ENCODE measurements at regions of chr19 and their contacts with region 1.

Region 1: GRCh38 chr19:17985037-17985818 is 18.3 kb downstream of the KCNN1 start:
- DNase-seq: no peak
- H3K4me3 ChIP-seq: no peak overlapping the region
- H3K27ac ChIP-seq: no peak overlapping the region
- H3K4me1 ChIP-seq: no peaks in the 10 kb centered on the region
- H3K27me3 ChIP-seq: no peaks in the 10 kb centered on the region
- CTCF ChIP-seq: no peak
- EP300 ChIP-seq: no peak
- POLR2A ChIP-seq: no peak

Region 2: DNA sequence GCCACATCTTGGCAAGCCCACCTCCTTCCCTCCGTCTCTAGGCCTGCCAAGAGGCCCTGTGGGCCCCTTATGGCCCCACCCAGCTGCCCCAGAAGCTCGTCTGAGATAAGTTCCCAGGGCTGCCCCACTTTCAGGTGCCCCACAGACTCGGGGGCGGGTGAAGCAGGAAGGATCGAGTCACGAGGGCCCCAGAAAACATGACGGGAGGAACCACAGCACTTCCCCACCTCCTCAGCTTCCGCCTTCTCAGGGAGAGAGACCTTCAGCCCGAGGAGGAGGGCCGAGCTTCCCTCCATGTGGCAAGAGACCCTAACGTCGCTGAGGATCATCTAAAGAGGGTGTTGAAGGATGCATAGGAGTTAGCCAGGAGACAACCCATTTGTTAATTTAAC is 106.0 kb after region 1 on chr19:
- intact Hi-C with region 1: no loop called
- DNase-seq: no peak
- H3K4me3 ChIP-seq: no peak overlapping the region
- H3K27ac ChIP-seq: no peak overlapping the region
- H3K4me1 ChIP-seq: no peaks in the 10 kb centered on the region
- H3K27me3 ChIP-seq: no peaks in the 10 kb centered on the region
- CTCF ChIP-seq: no peak
- EP300 ChIP-seq: no peak
- POLR2A ChIP-seq: no peak

Region 3: GRCh38 chr19:19624032-19624570 is 1638.9 kb after region 1 on chr19:
- intact Hi-C with region 1: loop called in 1 of 4 experiments (anchors 5 kb)
- DNase-seq: no peak
- H3K4me3 ChIP-seq: no peak overlapping the region
- H3K27ac ChIP-seq: no peak overlapping the region
- H3K4me1 ChIP-seq: peaks cover 3% of the 10 kb centered on the region
- H3K27me3 ChIP-seq: no peaks in the 10 kb centered on the region
- CTCF ChIP-seq: no peak
- EP300 ChIP-seq: no peak
- POLR2A ChIP-seq: no peak

Measured in ovary (tissue), 10 donors.